CD8-positive, alpha-beta T cell (primary cell): ENCODE measurements at regions of chr15 and their contacts with region 1.

Region 1: GRCh38 chr15:55434989-55435825 is 26.9 kb downstream of the PIERCE2 start:
- DNase-seq: peak in 3 of 9 experiments; percentile 10 to 66 (median 56)
- ATAC-seq: peak; percentile 51
- H3K4me3 ChIP-seq: no peak overlapping the region
- H3K4me3 Mint-ChIP-seq: no peak overlapping the region
- H3K27ac ChIP-seq: no peak overlapping the region
- H3K27ac Mint-ChIP-seq: no peak overlapping the region
- H3K4me1 ChIP-seq: no peaks in the 10 kb centered on the region
- H3K4me1 Mint-ChIP-seq: no peaks in the 10 kb centered on the region
- H3K27me3 ChIP-seq: no peaks in the 10 kb centered on the region
- H3K27me3 Mint-ChIP-seq: no peaks in the 10 kb centered on the region
- CTCF ChIP-seq: peak; percentile 64

Region 2: DNA sequence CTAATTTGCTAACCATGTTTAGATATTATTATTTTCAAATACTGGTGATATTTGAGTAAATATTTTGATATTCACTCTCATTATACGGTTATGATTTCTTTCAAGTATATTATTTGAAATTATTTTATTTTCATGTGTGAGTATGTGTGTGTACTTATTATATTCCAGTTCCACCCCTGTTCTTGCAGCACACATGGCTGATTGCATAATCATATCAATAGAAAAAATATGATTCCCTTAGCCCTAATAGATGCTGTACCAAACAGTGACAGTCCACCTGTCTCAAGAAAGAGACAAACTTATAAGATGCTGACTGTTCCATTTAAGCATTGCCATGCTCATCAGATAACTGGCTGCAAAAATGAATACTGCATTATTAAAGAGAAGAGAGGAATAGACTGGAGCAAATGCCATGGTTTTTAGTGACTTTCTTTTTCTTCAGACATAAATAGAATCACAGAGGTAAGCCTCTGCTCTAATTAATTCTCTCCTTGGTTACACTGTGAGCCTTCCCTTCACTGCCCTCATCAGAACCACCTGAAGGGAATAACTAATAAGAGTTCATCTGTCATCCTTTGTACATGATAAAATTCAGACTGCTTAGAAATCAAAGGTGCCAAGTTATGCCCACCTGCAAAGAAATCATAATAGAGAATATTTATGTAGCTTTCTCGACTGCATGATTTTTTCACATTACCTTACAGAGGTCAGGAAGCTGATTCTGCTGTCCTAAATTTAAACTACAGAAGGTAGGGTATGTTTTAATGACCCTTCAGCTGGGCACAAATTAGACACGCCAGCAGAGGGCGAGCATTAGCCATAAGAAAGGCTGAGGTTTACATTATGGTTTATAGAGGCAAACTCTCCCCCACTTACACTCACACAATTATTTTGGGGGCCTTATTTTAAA is 1472.6 kb before region 1 on chr15:
- CTCF ChIA-PET with region 1: no interaction called
- POLR2A ChIA-PET with region 1: no interaction called
- intact Hi-C with region 1: loop called (anchors 10 kb)
- DNase-seq: peak in 3 of 9 experiments; percentile 6 to 12 (median 11)
- ATAC-seq: no peak
- H3K4me3 ChIP-seq: no peak overlapping the region
- H3K4me3 Mint-ChIP-seq: no peak overlapping the region
- H3K27ac ChIP-seq: no peak overlapping the region
- H3K27ac Mint-ChIP-seq: no peak overlapping the region
- H3K4me1 ChIP-seq: no peaks in the 10 kb centered on the region
- H3K4me1 Mint-ChIP-seq: no peaks in the 10 kb centered on the region
- H3K27me3 ChIP-seq: no peaks in the 10 kb centered on the region
- H3K27me3 Mint-ChIP-seq: no peaks in the 10 kb centered on the region
- CTCF ChIP-seq: no peak

Region 3: GRCh38 chr15:54082836-54083492 is 1352.2 kb before region 1 on chr15:
- CTCF ChIA-PET with region 1: no interaction called
- POLR2A ChIA-PET with region 1: no interaction called
- intact Hi-C with region 1: loop called in 1 of 2 experiments (anchors 10 kb)
- DNase-seq: peak in 2 of 9 experiments; percentile 1 to 16
- ATAC-seq: no peak
- H3K4me3 ChIP-seq: no peak overlapping the region
- H3K4me3 Mint-ChIP-seq: no peak overlapping the region
- H3K27ac ChIP-seq: no peak overlapping the region
- H3K27ac Mint-ChIP-seq: no peak overlapping the region
- H3K4me1 ChIP-seq: no peaks in the 10 kb centered on the region
- H3K4me1 Mint-ChIP-seq: no peaks in the 10 kb centered on the region
- H3K27me3 ChIP-seq: no peaks in the 10 kb centered on the region
- H3K27me3 Mint-ChIP-seq: peaks cover 3% of the 10 kb centered on the region
- CTCF ChIP-seq: peak; percentile 53

Region 4: GRCh38 chr15:54687628-54688027 is 747.6 kb before region 1 on chr15:
- CTCF ChIA-PET with region 1: no interaction called
- POLR2A ChIA-PET with region 1: no interaction called
- intact Hi-C with region 1: loop called in 1 of 2 experiments (anchors 5 kb)
- DNase-seq: no peak
- ATAC-seq: no peak
- H3K4me3 ChIP-seq: no peak overlapping the region
- H3K4me3 Mint-ChIP-seq: no peak overlapping the region
- H3K27ac ChIP-seq: no peak overlapping the region
- H3K27ac Mint-ChIP-seq: no peak overlapping the region
- H3K4me1 ChIP-seq: no peaks in the 10 kb centered on the region
- H3K4me1 Mint-ChIP-seq: no peaks in the 10 kb centered on the region
- H3K27me3 ChIP-seq: no peaks in the 10 kb centered on the region
- H3K27me3 Mint-ChIP-seq: peaks cover 2% of the 10 kb centered on the region
- CTCF ChIP-seq: no peak

Region 5: DNA sequence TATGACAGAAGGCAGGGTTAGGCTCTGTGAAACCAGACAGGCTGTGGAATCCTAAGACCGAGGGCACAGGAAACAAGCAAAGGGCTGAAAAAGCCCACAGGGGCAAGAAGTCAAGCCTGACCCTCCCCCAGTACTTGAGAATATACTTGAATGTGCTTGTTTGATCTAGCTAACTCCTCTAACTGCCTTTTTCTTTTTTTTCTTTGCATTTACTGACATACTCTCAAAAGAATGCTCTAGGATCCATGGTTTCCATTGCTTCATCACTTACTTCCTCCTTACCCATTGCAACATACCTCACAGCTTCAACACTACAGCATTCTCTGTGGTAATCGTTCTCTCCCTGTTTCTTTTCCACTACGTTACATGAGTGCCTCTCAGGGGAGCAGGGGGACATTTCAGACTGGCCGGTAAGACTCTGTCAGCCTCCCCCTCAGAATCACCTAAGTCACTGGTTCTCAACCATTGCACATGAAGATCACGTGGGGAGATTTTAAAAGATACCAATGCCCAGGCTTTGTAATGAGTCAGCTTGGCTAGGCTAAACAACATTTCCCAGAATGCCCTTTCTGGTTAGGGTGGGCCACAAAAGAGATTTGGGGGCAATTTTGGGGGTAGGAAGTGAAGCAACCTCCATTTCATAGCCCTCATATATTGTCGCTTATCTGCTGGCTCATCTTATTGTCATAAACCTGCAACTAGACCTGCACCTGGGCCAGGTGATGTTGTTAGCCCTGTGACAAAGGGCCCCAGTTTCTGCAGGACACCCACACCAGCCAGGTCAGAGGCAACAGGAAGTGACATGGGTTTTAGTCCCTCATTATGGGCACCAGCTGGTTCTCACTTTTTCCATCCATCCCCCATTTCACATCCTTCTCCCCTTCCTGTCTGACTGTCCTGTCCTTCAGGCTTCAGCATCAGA is 213.9 kb before region 1 on chr15:
- CTCF ChIA-PET with region 1: interaction called, 18 read pairs
- POLR2A ChIA-PET with region 1: no interaction called
- intact Hi-C with region 1: loop called (anchors 1 kb)
- DNase-seq: peak in 4 of 9 experiments; percentile 25 to 64 (median 36)
- ATAC-seq: peak; percentile 27
- H3K4me3 ChIP-seq: no peak overlapping the region
- H3K4me3 Mint-ChIP-seq: peak overlapping the region; percentile 0
- H3K27ac ChIP-seq: peak overlapping the region in 1 of 2 experiments; percentile 66
- H3K27ac Mint-ChIP-seq: peak overlapping the region; percentile 85
- H3K4me1 ChIP-seq: peaks cover 52% of the 10 kb centered on the region
- H3K4me1 Mint-ChIP-seq: peaks cover 59% of the 10 kb centered on the region
- H3K27me3 ChIP-seq: no peaks in the 10 kb centered on the region
- H3K27me3 Mint-ChIP-seq: no peaks in the 10 kb centered on the region
- CTCF ChIP-seq: no peak

Region 6: GRCh38 chr15:55360256-55360655 is 75.0 kb before region 1 on chr15:
- CTCF ChIA-PET with region 1: interaction called, 5 read pairs
- POLR2A ChIA-PET with region 1: no interaction called
- intact Hi-C with region 1: loop called in 1 of 2 experiments (anchors 10 kb)
- DNase-seq: no peak
- ATAC-seq: no peak
- H3K4me3 ChIP-seq: no peak overlapping the region
- H3K4me3 Mint-ChIP-seq: no peak overlapping the region
- H3K27ac ChIP-seq: no peak overlapping the region
- H3K27ac Mint-ChIP-seq: peak overlapping the region; percentile 25
- H3K4me1 ChIP-seq: no peaks in the 10 kb centered on the region
- H3K4me1 Mint-ChIP-seq: no peaks in the 10 kb centered on the region
- H3K27me3 ChIP-seq: no peaks in the 10 kb centered on the region
- H3K27me3 Mint-ChIP-seq: no peaks in the 10 kb centered on the region
- CTCF ChIP-seq: no peak

Region 7: DNA sequence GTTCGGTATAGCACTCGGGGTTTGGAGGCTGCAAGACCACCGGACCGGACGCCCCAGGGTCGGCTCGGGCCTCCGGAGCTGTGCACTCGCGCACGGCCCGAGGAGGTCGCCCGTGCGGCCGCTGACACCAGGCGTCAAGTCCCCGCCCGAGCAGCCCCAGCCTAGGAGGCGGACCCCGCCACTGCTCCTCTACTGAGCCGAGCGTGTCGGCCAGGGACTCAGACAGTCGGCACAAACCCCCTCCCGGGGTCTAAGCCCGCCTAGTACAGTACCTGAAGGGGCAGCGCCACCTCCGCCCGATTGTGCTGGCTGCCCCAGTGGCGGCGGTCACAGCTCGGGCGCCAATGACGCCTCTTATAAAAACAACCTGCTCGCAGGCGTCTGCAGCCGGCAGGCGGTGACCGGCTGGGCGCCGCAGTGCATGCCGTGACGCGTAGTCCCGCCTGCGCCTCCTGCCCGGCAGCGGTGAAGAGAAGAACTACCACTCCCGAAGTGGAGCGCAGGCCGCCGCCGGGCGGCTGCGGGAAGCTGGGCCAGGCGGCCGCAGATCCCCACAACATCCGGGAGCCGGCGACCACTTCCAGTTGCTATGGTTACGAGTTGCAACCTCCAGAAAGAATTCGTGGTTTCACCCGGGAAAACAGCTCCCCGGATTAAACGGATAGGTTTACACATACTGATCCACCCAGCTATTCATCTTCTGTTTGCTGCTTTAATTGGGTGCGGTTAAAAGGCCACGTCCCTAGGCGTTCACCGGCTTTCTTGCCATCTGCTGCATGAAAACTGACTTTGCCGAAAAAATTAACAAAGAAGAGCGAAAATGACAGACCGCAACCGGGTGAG is 27.0 kb before region 1 on chr15 and contains the starts of genes CCPG1 and PIERCE2:
- CTCF ChIA-PET with region 1: interaction called, 13 read pairs
- POLR2A ChIA-PET with region 1: interaction called, 8 read pairs
- intact Hi-C with region 1: loop called (anchors 1 to 2 kb)
- DNase-seq: peak; percentile 76 to 95 (median 86)
- ATAC-seq: peak; percentile 92
- H3K4me3 ChIP-seq: peak within 1 kb of the TSS; percentile 80 to 84
- H3K4me3 Mint-ChIP-seq: peak within 1 kb of the TSS; percentile 89
- H3K27ac ChIP-seq: peak within 1 kb of the TSS; percentile 82
- H3K27ac Mint-ChIP-seq: peak within 1 kb of the TSS; percentile 92
- H3K4me1 ChIP-seq: peaks cover 26% of the 10 kb centered on the region
- H3K4me1 Mint-ChIP-seq: peaks cover 34% of the 10 kb centered on the region
- H3K27me3 ChIP-seq: no peaks in the 10 kb centered on the region
- H3K27me3 Mint-ChIP-seq: no peaks in the 10 kb centered on the region
- CTCF ChIP-seq: peak; percentile 93
- total RNA-seq, gene CCPG1: 35.5 to 37.6 TPM
- total RNA-seq, gene PIERCE2: not detected